ENCODE measurements at regions of chr13 and their contacts with region 1.

Region 1: DNA sequence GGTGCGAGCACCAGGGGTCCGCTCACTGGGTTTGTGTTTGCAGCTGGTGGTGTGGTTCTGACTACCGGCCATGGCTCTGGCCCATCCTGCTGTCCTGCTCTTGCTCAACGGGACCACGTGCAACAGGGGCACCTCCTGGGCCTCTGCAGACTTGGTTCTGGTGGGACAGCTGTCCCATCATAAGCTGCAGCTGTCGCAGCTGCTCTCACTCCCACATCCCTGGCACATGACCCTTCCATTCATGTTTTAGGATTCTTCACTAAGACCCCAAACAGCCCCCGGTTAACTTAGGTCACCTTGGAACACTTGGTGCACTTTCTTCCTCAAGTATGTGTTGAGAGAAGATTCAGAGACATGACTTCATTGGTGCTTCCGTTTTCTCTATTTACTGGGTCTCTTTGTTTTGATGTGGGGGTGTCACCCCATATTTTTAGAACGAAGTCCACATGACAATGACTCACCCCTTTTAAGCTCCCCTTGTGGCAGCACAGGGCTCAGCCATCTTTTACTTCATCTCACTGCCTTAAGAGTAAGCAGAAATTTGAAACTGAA is 68.4 kb upstream of the ARHGEF7 start:
- DNase-seq: peak; percentile 25 to 73 (median 38)
- ATAC-seq: peak; percentile 74
- H3K4me3 ChIP-seq: no peak overlapping the region
- H3K27ac ChIP-seq: peak overlapping the region; percentile 64; the same call in 2 of the 3 replicates
- H3K4me1 ChIP-seq: peaks cover 13 to 26% of the 10 kb centered on the region in 2 experiments
- H3K27me3 ChIP-seq: no peaks in the 10 kb centered on the region
- CTCF ChIP-seq: peak; percentile 17 to 41 (median 36); a peak in 3 of 6 replicates
- EP300 ChIP-seq: peak; percentile 45; the same call in 1 of the 2 replicates
- POLR2A ChIP-seq: no peak
- RAD21 ChIP-seq: peak in 1 of 2 experiments; percentile 30; a peak in 2 of 4 replicates

Region 2: GRCh38 chr13:110593430-110594130 is 453.1 kb before region 1 on chr13:
- CTCF ChIA-PET with region 1: no interaction called
- POLR2A ChIA-PET with region 1: no interaction called
- in situ Hi-C with region 1: no loop called
- intact Hi-C with region 1: loop called (anchors 10 kb)
- DNase-seq: peak; percentile 32 to 77 (median 52)
- ATAC-seq: peak; percentile 96
- H3K4me3 ChIP-seq: no peak overlapping the region
- H3K27ac ChIP-seq: no peak overlapping the region
- H3K4me1 ChIP-seq: peaks cover 7% of the 10 kb centered on the region in 2 experiments; a peak in 4 of 5 replicates
- H3K27me3 ChIP-seq: no peaks in the 10 kb centered on the region
- CTCF ChIP-seq: peak; percentile 45 to 72 (median 52); a peak in 5 of 6 replicates
- EP300 ChIP-seq: 0 out of 2 replicates have a peak, but pooled peaks have one; percentile 6
- POLR2A ChIP-seq: no peak
- RAD21 ChIP-seq: peak; percentile 79

Region 3: GRCh38 chr13:110831447-110832204 is 215.0 kb before region 1 on chr13:
- CTCF ChIA-PET with region 1: no interaction called
- POLR2A ChIA-PET with region 1: no interaction called
- in situ Hi-C with region 1: no loop called
- intact Hi-C with region 1: loop called (anchors 10 kb)
- DNase-seq: no peak
- ATAC-seq: no peak; the same call in 1 of the 3 replicates
- H3K4me3 ChIP-seq: no peak overlapping the region
- H3K27ac ChIP-seq: no peak overlapping the region
- H3K4me1 ChIP-seq: no peaks in the 10 kb centered on the region; a peak in 1 of 5 replicates
- H3K27me3 ChIP-seq: peaks cover 10 to 39% of the 10 kb centered on the region in 2 experiments; a peak in 4 of 5 replicates
- CTCF ChIP-seq: no peak
- EP300 ChIP-seq: no peak
- POLR2A ChIP-seq: no peak
- RAD21 ChIP-seq: no peak

Region 4: DNA sequence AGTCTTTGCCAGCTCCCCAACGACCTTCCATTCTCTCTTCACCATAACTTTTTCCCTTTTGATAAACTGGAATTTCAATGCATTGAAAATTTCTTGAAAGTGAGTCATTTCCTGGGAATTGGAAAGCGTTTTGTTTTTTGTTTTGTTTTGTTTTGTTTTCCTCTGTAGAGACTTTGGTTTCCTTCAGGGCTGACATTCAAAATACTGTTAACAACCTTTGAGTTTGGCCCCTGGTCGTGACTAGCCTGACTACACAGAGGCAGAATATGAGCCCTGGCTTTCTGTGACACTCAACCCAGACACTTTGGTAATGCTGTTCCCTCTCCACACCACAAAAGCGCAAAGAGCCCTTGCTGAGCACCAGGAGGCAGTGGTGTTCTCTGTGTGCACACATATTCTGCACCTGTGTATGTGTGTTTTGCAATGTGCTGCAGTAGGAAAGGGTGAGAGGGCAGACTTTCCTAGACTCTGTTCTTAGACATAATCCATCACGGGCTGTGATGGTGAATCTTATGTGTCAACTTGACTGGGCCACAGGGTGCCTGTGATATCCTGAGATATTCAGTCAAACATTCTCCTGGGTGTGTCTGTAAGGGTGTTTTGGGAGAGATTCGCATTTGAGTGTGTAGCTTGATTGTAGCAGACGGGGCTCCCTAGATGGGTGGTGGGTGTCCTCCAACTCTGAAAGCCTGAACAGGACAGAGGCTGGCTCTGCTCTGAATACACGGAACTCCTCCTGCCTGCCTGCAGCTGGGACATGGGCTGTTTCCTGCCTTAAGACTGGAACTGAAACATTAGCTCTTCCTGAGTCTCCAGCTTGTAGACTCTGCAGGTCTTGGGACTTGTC is 102.3 kb before region 1 on chr13:
- CTCF ChIA-PET with region 1: interaction called, 12 read pairs
- POLR2A ChIA-PET with region 1: no interaction called
- in situ Hi-C with region 1: loop called (anchors 5 kb)
- intact Hi-C with region 1: loop called (anchors 1 kb)
- DNase-seq: peak; percentile 39 to 81 (median 52)
- ATAC-seq: peak; percentile 97
- H3K4me3 ChIP-seq: no peak overlapping the region
- H3K27ac ChIP-seq: peak overlapping the region; percentile 59; the same call in 2 of the 3 replicates
- H3K4me1 ChIP-seq: peaks cover 10 to 13% of the 10 kb centered on the region in 2 experiments; a peak in 4 of 5 replicates
- H3K27me3 ChIP-seq: no peaks in the 10 kb centered on the region
- CTCF ChIP-seq: peak; percentile 81 to 89 (median 88)
- EP300 ChIP-seq: no peak
- POLR2A ChIP-seq: no peak
- RAD21 ChIP-seq: peak; percentile 91 to 99

Measured in K562 (cell line).